ENCODE measurements at regions of chr6 and their contacts with region 1.

Region 1: DNA sequence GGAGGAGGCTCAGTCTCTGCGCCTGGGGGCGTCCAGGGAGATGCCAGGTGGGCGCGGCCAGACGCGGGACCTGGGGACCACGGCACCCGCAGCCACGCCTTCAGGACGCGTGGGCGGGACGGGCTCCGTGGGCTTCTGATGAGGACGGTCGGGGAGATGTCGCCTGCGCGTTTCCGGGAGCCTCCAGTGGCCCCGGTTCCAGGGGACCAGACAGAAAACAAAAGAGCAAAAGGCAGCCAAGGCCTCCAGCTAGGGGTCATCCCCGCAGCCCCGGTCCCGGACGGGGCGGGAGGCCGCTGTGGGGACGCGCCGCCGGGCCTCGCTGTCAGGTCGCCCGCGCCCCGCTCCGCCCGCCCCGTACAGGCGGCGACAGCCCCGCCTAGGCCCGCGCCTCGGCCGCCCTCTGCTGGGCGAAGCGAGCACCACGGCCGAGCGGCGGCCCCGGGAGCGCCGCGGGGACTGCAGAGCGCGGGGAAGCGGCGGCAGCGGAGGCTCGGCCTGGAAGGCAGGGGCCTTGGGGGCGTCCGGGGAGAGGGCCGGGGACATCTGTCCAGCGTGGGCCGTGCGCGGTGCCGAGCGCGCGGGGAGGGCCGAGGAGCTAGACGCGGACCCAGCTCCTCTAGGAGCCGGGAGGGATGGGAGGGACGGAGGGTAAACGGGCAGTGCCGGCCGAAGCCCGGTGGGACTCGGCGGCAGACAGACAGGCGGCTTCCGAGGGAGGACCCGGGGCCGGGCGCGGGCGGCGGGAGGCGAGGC is 48.7 kb downstream of the TMEM242 start:
- DNase-seq: peak; percentile 73
- H3K4me3 ChIP-seq: peak overlapping the region; percentile 35 to 43 (median 42)
- H3K27ac ChIP-seq: no peak overlapping the region
- H3K4me1 ChIP-seq: peaks cover 7% of the 10 kb centered on the region
- H3K27me3 ChIP-seq: no peaks in the 10 kb centered on the region
- CTCF ChIP-seq: peak; percentile 54 to 82
- POLR2A ChIP-seq: no peak

Region 2: DNA sequence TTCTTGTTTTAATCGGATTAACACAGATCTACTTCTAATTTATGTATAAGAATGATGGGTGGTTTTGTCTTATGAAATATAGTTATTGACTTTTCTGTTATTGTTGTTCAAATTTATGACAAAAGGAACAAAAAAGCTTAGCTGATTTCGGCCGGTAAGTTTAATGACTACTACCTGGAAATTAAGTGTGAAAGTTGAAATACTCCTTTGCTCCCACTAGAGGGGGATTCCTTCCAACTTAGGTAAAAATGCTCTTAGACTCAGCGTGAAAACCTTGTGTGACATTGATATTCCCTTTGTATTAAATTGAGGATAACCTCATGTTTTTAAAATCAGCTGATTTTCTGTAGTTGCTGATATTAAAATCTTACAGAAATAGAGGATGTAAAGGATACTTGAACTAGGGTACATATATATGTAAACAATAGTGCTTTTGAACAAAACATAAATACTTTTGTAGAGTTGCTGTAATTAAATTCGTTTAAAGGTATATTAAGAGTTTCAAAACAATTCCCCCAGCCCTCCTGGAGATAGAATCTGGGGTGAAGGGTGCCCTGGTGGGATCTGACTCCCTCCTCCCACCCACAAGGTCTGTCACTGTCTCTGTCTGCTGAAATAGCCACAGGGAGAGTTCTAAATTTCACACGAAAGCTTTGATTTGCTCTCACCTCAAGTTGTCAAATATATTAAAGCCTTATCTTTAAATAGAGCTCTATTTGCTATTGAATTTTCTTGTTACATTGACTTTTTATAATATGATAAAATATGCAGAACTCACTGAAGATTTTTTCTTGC is 240.0 kb before region 1 on chr6:
- CTCF ChIA-PET with region 1: no interaction called
- POLR2A ChIA-PET with region 1: no interaction called
- dilution Hi-C with region 1: no loop called
- intact Hi-C with region 1: loop called (anchors 5 kb)
- DNase-seq: peak; percentile 65
- H3K4me3 ChIP-seq: no peak overlapping the region
- H3K27ac ChIP-seq: peak overlapping the region; percentile 16
- H3K4me1 ChIP-seq: peaks cover 8% of the 10 kb centered on the region
- H3K27me3 ChIP-seq: no peaks in the 10 kb centered on the region
- CTCF ChIP-seq: peak; percentile 50 to 54
- POLR2A ChIP-seq: no peak

Region 3: GRCh38 chr6:157227202-157228166 is 47.2 kb before region 1 on chr6:
- CTCF ChIA-PET with region 1: interaction called, 15 read pairs
- POLR2A ChIA-PET with region 1: no interaction called
- dilution Hi-C with region 1: no loop called
- intact Hi-C with region 1: loop called (anchors 1 kb)
- DNase-seq: peak; percentile 55
- H3K4me3 ChIP-seq: no peak overlapping the region
- H3K27ac ChIP-seq: no peak overlapping the region
- H3K4me1 ChIP-seq: no peaks in the 10 kb centered on the region
- H3K27me3 ChIP-seq: no peaks in the 10 kb centered on the region
- CTCF ChIP-seq: peak; percentile 30 to 49
- POLR2A ChIP-seq: no peak

Region 4: GRCh38 chr6:157235600-157236039 is 39.0 kb before region 1 on chr6:
- CTCF ChIA-PET with region 1: interaction called, 34 read pairs
- POLR2A ChIA-PET with region 1: no interaction called
- dilution Hi-C with region 1: no loop called
- intact Hi-C with region 1: loop called (anchors 2 kb)
- DNase-seq: peak; percentile 55
- H3K4me3 ChIP-seq: peak overlapping the region; percentile 20 to 46 (median 28)
- H3K27ac ChIP-seq: no peak overlapping the region
- H3K4me1 ChIP-seq: peaks cover 8% of the 10 kb centered on the region
- H3K27me3 ChIP-seq: peaks cover 33% of the 10 kb centered on the region in 2 experiments
- CTCF ChIP-seq: peak; percentile 54 to 78
- POLR2A ChIP-seq: no peak

Region 5: DNA sequence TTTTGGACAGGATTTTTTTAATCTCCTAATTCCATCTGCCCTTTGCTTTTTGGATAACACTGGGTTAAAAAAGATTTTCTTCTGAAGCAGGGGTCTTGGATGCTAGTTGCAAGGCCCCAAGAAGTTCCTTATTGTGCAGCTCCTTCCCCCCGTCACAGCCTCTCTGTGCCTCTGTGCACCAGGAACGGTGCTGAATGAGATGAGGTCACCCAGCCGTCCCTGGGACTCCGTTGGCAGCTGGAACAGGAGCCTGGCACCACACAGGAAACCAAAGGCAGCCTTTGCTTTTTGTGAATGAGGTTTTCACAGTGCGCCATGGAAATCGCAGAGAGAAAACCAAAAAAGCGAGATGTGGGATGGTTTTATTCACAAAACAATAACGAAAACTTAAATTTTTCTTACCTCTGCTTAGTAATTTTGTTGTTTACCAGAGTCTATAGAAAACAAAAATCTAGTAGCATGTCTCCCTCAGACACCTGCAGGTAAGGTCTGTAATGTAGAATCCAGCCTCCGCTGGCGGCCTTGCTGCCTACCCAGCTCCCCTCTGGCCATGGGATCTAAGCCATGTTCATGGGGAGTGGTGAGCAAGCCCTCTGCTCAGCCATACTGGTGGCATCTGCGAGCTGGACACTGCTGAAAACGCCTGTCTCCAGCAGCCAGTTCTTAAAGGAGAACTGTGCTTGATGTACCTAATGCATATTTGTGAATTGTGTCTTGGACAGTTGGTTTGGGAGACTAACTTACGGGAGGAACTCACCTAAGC is 666.6 kb after region 1 on chr6:
- CTCF ChIA-PET with region 1: no interaction called
- POLR2A ChIA-PET with region 1: no interaction called
- dilution Hi-C with region 1: no loop called
- intact Hi-C with region 1: no loop called
- DNase-seq: no peak
- H3K4me3 ChIP-seq: no peak overlapping the region
- H3K27ac ChIP-seq: no peak overlapping the region
- H3K4me1 ChIP-seq: no peaks in the 10 kb centered on the region
- H3K27me3 ChIP-seq: no peaks in the 10 kb centered on the region
- CTCF ChIP-seq: no peak
- POLR2A ChIP-seq: no peak